Heart left ventricle (tissue), 16 donors: ENCODE measurements at regions of chr9 and their contacts with region 1.

Region 1: DNA sequence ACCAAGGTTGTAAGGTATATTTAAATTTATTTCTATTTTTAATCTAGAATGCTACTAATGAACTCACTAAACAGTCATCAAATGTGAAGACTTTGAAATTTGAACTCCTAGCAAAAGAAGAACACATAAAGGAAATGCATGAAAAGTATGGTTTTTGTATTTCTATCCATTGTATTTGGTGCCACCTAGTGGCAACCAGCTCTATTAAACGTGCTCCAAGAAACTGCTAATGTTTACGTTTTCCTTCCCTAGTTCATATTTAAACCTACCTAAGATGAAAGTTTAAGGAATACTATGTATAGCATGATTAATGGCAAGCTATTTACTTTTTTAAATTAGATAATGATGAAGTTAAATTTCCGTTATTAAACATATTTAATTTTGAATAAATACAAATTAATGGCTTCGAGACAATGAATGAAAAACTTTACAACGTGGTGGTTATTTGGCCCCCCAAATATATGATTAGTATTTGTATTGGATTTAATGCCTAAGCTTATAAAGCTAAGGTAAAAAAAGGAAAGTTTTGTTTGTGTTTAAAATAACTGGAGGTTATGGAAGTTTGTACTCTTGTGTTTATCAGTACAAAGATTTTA is 115.9 kb upstream of the SH3GL2 start:
- DNase-seq: no peak
- ATAC-seq: no peak
- H3K4me3 ChIP-seq: no peak overlapping the region
- H3K27ac ChIP-seq: no peak overlapping the region
- H3K4me1 ChIP-seq: no peaks in the 10 kb centered on the region
- H3K27me3 ChIP-seq: no peaks in the 10 kb centered on the region
- CTCF ChIP-seq: peak; percentile 51 to 88 (median 72)
- POLR2A ChIP-seq: no peak

Region 2: DNA sequence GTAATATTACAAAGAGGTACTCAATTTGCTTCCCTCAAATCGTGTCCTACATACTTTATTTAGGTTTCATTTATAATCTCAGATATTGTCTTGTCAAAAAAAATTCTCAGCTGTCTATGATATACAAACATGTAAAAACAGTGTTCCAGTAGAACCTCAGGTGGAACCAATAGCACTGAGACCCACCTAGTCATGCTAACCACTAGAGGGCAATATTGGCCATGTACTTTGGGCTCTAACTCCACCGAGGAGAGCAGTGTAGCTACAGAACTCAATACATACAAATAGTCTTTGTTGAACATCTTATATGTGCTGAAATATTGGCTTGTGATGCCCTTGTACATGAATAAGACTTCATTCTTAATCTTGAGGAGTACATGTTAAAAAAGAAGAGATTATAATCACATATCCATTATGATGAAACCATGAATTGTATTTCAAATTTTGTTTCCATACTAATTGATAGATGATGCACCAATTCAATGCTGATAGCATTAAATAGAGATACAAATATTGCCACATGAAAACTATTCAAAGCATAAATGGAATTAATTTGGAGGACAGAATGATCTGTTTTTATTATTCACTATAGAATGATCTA is 399.3 kb before region 1 on chr9:
- intact Hi-C with region 1: loop called in 4 of 10 experiments (anchors 5 kb)
- DNase-seq: no peak
- ATAC-seq: peak in 2 of 4 donors; percentile 72 to 81
- H3K4me3 ChIP-seq: no peak overlapping the region
- H3K27ac ChIP-seq: no peak overlapping the region
- H3K4me1 ChIP-seq: no peaks in the 10 kb centered on the region
- H3K27me3 ChIP-seq: no peaks in the 10 kb centered on the region
- CTCF ChIP-seq: peak; percentile 45 to 75 (median 58)
- POLR2A ChIP-seq: no peak

Region 3: DNA sequence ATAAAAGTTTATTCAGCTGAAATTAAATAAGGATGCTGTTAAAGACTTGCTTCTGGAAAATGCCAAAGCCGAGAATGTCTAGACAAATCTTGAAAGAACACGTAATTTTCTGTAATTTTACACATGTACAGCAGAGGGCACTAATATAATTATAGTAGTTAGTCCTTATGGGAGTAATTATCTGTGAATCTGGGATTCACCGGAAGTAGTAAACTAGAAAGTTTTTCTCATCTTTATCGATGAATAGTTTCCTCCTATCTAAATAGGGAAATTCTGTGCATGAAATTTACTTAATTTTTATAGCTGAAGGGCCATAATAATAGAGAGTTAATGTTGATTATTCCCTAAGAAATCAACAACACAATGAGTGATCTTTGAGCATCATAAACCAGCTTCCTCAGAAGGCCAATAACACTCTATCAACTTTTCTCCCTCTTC is 346.5 kb before region 1 on chr9:
- intact Hi-C with region 1: loop called (anchors 1 to 5 kb)
- DNase-seq: no peak
- ATAC-seq: no peak
- H3K4me3 ChIP-seq: no peak overlapping the region
- H3K27ac ChIP-seq: no peak overlapping the region
- H3K4me1 ChIP-seq: no peaks in the 10 kb centered on the region
- H3K27me3 ChIP-seq: peaks cover 0 to 5% (median 0%) of the 10 kb centered on the region in 9 donors
- CTCF ChIP-seq: peak; percentile 32 to 72 (median 53)
- POLR2A ChIP-seq: no peak

Region 4: DNA sequence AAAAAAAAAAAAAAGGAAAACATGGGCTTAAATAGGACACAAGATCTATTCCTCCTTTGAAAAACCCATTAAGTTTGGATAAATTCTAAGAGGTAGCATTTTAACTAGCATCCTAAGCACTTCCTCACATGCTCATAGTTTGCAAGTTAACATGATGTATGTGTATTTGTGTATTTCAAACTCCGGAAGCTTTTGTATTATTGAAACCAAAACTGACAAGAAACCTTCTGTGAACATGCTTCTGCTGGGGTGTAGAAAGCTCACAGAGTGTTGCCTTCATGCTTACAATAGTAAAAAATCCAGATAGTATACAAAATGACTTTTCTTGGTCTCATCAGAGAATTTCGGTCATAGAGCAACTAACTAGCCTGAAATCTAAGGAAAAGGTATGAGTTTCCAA is 219.7 kb after region 1 on chr9:
- intact Hi-C with region 1: no loop called
- DNase-seq: no peak
- ATAC-seq: no peak
- H3K4me3 ChIP-seq: no peak overlapping the region
- H3K27ac ChIP-seq: no peak overlapping the region
- H3K4me1 ChIP-seq: no peaks in the 10 kb centered on the region
- H3K27me3 ChIP-seq: no peaks in the 10 kb centered on the region
- CTCF ChIP-seq: no peak
- POLR2A ChIP-seq: no peak